Common myeloid progenitor, CD34-positive (primary cell): ENCODE measurements at regions of chr17 and their contacts with region 1.

Region 1: DNA sequence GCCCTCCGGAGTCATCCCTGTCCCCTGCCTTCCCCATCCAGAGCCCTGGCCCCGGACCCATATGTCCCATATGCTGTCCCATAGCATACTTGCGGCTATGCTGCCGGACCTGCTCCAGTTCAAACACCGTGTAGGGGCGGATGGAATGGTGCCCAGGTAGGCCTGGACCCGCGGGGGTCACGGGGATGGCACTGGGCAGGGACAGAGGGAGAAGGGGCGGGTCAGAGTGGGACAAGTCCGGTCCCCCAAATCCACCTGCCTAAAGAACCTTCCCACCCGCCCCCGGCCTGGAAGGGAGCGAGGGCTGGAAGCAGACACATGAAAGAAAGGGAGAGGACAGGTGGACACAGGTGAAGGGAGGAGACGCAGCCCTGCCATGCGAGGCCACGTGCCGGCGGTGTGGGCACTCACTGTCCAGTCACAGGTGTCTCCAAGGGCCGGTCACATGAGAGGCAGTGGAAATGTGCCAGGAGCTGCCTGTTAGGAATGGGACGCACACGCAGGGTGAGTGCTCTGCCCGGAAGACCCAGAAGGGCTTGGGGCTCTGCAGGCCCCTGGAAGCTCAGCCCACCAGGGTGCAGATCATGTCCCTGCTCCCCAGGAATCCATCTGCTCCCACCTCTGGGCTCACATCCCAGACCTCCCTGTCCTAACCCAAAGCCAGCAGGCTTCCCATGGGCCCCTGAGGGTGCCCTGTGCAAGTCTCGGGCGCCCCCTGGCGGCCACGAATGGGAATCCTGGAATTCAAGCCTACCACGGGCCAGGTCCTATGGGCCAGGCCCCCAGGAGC is 14.0 kb downstream of the UBALD2 start:
- DNase-seq: peak; percentile 66 to 76 (median 67)
- H3K4me3 ChIP-seq: no peak overlapping the region
- H3K27ac ChIP-seq: no peak overlapping the region
- H3K4me1 ChIP-seq: peaks cover 0 to 28% (median 6%) of the 10 kb centered on the region in 4 experiments
- H3K27me3 ChIP-seq: no peaks in the 10 kb centered on the region

Region 2: DNA sequence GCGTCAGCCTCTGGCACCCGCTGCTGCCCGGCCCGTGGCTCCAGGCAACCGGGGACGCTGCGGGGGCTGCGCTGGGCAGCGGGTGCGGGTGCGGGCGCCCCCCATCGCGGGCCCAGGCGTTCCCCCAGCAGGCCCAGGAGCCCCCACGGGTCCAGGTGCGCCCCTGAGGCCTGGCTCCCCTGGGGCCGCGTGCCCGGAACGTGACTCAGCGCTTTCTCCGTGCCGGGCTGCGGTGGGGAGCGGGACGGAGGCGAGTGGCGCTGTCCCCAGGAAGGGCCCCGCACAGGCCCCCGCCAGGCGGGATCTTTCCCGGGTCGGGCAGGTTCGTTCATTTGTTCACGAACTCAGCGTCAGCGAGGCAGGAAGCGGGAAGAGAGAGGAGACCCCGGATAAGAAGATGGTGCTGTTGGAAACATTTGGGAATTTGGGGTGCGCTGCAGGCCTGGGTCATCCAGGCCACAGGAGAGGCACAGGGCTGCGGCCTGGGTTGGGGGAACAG is 157.2 kb before region 1 on chr17:
- CTCF ChIA-PET with region 1: interaction called, 110 read pairs
- POLR2A ChIA-PET with region 1: no interaction called
- DNase-seq: peak in 2 of 3 donors; percentile 68 to 75
- H3K4me3 ChIP-seq: peak overlapping the region in 3 of 7 experiments; percentile 33 to 46 (median 43)
- H3K27ac ChIP-seq: no peak overlapping the region
- H3K4me1 ChIP-seq: peaks cover 0 to 15% (median 14%) of the 10 kb centered on the region in 4 experiments
- H3K27me3 ChIP-seq: no peaks in the 10 kb centered on the region

Region 3: GRCh38 chr17:76141212-76142038 is 137.7 kb before region 1 on chr17 and contains the start of gene FOXJ1:
- CTCF ChIA-PET with region 1: interaction called, 27 read pairs
- POLR2A ChIA-PET with region 1: interaction called, 3 read pairs
- DNase-seq: peak; percentile 89 to 94 (median 93)
- H3K4me3 ChIP-seq: peak within 1 kb of the TSS in 6 of 7 experiments; percentile 49 to 74 (median 63)
- H3K27ac ChIP-seq: no peak within 1 kb of the TSS
- H3K4me1 ChIP-seq: peaks cover 5 to 61% (median 54%) of the 10 kb centered on the region in 4 experiments
- H3K27me3 ChIP-seq: peaks cover 0 to 33% (median 18%) of the 10 kb centered on the region in 5 experiments

Region 4: GRCh38 chr17:76182016-76182764 is 97.0 kb before region 1 on chr17:
- CTCF ChIA-PET with region 1: interaction called, 40 read pairs
- POLR2A ChIA-PET with region 1: no interaction called
- DNase-seq: peak; percentile 95 to 98 (median 97)
- H3K4me3 ChIP-seq: no peak overlapping the region
- H3K27ac ChIP-seq: no peak overlapping the region
- H3K4me1 ChIP-seq: peaks cover 0 to 7% (median 3%) of the 10 kb centered on the region in 4 experiments
- H3K27me3 ChIP-seq: no peaks in the 10 kb centered on the region

Region 5: DNA sequence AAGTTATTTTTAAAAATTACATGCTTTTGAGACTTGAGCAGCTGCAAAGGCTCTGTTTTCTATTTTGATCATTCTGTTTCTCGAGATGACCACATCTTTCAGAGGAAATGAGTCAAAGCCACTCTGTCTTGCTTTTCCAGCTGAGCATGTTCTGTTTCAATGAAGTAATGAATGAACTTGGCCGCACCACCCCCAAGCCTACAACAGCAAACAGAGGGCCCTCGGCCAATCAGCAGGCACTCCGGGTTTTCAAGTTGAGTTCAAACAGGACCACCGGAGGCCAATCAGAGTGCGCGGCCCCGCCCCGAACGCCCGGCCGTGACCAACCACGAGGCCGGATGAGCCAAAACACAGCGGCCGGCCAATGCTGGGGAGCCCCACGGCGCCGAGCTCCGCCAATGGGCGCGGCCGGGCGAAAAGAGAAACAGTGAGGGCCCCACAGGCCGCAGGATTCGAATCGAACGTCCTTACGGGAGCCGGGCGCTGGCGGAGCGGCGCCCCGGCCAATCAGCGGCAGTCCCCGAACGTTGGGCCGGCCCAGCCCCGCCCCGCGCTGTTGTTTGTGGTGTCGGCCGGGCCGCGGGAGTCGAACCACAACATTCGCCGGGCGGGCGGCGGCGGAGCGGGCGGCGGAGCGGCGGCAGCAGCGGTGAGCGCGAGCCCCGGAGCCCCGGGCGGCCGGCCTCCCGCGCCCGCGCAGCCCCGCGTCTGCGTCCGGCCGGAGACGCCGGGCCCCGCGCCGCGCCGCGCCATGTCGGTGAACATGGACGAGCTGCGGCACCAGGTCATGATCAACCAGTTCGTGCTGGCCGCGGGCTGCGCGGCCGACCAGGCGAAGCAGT is 14.2 kb before region 1 on chr17 and contains the start of gene UBALD2:
- CTCF ChIA-PET with region 1: interaction called, 27 read pairs
- POLR2A ChIA-PET with region 1: interaction called, 4 read pairs
- DNase-seq: peak; percentile 98 to 100 (median 99)
- H3K4me3 ChIP-seq: peak within 1 kb of the TSS; percentile 71 to 97 (median 87)
- H3K27ac ChIP-seq: peak within 1 kb of the TSS; percentile 89 to 94
- H3K4me1 ChIP-seq: peaks cover 26 to 85% (median 68%) of the 10 kb centered on the region in 4 experiments
- H3K27me3 ChIP-seq: no peaks in the 10 kb centered on the region